ENCODE measurements at regions of chr12 and their contacts with region 1.

Region 1: GRCh38 chr12:105420659-105421240 is 90.3 kb downstream of the C12orf75 start:
- DNase-seq: peak; percentile 57
- CTCF ChIP-seq: peak; percentile 89

Region 2: DNA sequence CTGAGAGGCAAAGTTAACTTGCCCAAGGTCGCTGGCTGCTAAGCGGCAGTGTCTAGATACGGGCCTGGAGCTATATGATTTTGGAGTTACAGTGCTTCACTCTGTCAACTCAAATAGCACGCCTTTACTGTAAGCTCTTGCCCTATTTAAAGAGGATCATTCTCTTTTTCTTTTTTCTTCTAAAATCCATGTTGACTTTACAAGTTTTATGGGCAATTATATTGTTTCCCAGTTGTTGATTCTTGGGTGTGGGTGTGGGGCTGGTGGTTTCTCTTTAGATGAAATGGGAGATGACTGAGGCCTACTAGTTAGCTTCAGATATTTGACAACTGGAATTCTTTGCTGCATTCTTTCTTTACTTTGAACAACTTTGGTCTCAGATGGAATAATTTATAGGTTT is 19.6 kb before region 1 on chr12:
- CTCF ChIA-PET with region 1: interaction called, 27 read pairs
- POLR2A ChIA-PET with region 1: no interaction called
- DNase-seq: no peak
- CTCF ChIP-seq: no peak

Region 3: DNA sequence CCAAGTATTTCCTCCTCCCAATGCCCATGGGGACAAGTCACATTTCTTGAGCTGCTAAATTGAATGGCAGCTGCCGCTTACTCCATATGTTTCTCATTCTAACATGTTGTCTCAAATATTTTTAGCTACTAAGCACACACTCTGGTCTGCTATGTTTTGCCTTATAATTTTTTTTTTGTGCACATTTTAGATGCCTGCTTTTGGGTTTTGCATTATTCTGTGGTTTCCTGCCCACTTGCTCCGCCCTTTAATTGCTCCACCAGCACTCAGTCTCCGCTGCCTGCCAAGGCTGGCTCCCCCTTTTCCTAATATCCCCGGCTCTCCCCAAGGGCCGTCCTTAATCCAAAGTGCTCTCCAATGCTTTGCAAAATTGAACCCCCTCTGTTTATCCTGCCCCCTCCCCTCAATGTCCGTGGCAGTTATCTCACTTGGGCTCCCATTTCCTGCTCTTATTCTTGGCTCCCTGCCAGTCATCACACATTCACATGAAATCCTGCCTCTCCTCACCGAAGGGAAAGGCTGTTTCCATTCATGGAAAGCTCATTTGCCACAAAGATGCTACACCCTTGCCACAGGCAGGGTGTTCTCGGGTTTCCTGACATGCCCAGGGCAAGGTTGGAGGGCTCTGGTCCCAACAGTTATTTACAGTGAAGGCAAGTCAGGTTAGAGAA is 10.8 kb before region 1 on chr12:
- CTCF ChIA-PET with region 1: interaction called, 16 read pairs
- POLR2A ChIA-PET with region 1: no interaction called
- DNase-seq: no peak
- CTCF ChIP-seq: no peak

Region 4: DNA sequence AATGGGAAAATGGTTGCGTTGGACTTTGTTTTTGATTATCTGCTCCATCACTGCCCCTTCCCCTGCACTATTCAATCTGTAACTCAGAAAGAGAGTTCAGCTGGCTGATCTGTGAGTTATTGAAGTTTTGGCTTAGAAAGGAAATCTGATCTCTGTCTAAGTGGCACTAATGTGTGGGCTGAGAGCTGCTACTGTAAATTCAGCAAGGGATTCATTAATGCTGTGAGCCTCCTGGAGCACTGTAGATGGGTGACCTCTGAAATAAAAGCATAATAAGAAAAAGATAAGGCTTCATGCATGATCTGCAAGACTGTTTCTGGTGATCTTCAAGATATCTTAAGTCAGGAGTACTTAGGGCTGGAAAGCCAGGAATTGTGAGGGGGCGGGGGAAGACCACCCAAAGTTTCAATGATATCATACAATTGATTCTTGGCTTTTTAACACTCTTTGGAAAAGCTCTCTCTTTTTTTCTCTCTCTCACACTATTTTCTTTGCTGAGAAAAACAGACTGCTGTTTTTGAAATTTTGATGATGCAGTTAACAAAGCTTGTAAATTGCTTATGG is 10.9 kb after region 1 on chr12:
- CTCF ChIA-PET with region 1: interaction called, 25 read pairs
- POLR2A ChIA-PET with region 1: no interaction called
- DNase-seq: no peak
- CTCF ChIP-seq: no peak

Region 5: GRCh38 chr12:105534068-105534467 is 113.3 kb after region 1 on chr12:
- CTCF ChIA-PET with region 1: no interaction called
- POLR2A ChIA-PET with region 1: no interaction called
- DNase-seq: no peak
- CTCF ChIP-seq: no peak

Region 6: GRCh38 chr12:105654606-105655005 is 233.9 kb after region 1 on chr12:
- CTCF ChIA-PET with region 1: no interaction called
- POLR2A ChIA-PET with region 1: no interaction called
- DNase-seq: no peak
- CTCF ChIP-seq: no peak

Region 7: DNA sequence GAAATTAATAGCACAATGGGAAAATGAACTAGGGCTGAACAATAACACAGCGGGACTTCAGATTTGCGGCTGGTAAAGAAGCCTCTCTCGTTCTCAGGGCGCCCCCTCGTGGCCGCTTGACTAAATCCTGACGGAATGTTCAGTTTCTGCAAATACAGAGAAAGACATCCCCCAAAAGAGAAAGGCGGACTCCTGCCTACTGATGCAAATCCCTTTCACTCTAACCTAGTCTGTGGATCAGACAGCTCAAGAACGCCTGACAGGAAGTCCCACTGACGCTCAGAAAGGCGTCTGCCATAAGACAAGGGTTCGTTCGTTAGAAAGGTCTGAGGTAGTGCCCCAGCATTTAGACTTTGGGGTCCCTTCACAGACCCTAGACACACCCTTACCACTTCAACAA is 715.5 kb after region 1 on chr12:
- CTCF ChIA-PET with region 1: interaction called, 93 read pairs
- POLR2A ChIA-PET with region 1: no interaction called
- DNase-seq: peak; percentile 75
- CTCF ChIP-seq: peak; percentile 83

Region 8: DNA sequence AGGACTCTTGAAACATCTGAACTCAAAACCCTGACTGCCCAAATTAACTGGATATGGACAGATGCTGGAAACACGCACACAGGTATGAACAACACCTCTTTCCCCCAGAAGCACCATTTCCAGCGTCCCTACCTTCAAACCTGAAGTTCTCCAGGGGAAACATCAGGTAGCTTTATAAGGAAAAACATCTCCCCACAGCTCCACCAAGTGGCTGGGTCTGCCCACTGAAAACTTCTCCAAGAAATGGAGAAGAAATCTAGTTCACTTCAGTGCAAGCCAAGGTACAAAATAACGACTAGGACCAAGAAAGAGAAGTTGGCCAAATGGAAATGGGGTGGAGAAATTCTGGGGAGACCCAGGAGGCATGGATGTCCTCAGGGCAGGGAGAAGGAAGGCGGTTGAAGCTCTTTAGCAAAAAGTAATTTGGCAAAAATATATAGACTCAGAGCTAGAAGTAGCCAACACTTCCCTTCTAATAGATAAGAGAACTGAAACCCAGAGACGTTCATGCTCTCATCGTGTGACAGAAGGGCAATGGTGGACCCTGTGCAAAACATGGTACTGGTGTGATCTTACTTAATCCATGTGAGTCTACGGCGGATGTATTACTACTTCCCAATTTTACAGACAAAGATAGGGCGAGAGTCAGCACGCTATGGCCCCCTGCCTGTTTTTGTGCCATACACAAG is 728.5 kb after region 1 on chr12:
- CTCF ChIA-PET with region 1: interaction called, 11 read pairs
- POLR2A ChIA-PET with region 1: no interaction called
- DNase-seq: no peak
- CTCF ChIP-seq: peak; percentile 38

Region 9: DNA sequence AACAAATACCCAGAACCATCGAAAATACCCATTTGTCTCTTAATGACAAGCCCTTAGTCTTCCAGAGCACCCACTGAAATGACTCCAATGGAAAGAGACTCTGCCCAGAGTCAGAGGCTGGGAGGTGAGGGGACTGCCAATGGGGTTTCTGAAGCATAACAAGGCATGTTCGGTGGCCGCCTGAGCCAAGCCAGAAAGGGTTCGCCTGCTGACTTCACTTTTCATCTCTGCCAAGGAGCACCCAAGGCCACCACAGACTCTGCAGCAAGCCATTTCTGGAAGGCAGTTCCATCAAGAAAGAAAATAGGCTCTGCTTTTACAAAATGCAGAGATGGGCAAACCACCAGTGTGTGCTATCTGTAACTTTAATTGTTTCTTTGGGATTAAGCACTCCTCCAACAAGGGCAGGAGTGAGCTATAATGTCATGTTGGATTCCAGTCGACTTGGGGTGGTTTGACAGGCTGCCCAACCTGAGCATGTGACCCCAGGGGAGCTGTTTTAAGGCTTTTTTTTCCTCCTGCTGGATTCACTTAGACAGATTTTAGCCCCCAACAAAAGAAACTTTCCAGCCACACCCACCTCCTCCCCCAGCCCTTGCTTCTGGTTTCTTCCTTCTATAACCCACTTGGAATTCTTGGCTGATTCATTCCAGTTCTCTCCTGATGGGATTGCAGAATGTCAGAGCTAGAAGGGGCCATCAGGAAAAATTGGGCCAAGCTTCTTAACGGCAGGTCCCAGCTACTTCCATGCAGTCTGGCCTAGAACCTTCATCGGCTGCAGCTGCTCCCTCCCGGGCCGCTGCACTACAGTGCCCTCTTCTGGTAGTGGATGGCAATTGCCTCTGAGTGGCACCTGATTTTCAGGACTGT is 803.0 kb after region 1 on chr12:
- CTCF ChIA-PET with region 1: interaction called, 25 read pairs
- POLR2A ChIA-PET with region 1: no interaction called
- DNase-seq: peak; percentile 83
- CTCF ChIP-seq: peak; percentile 99